ENCODE measurements at regions of chr7 and their contacts with region 1.

Region 1: GRCh38 chr7:101882595-101883564 is 65.5 kb downstream of the CUX1 start:
- DNase-seq: peak; percentile 95
- H3K4me3 ChIP-seq: peak overlapping the region in 2 of 4 donors; percentile 4 to 15
- H3K27ac ChIP-seq: peak overlapping the region; percentile 83 to 91 (median 84)
- H3K4me1 ChIP-seq: peaks cover 70 to 79% (median 75%) of the 10 kb centered on the region in 4 donors
- H3K27me3 ChIP-seq: no peaks in the 10 kb centered on the region
- CTCF ChIP-seq: peak in 2 of 3 experiments; percentile 3 to 20
- EP300 ChIP-seq: peak; percentile 17
- POLR2A ChIP-seq: no peak

Region 2: DNA sequence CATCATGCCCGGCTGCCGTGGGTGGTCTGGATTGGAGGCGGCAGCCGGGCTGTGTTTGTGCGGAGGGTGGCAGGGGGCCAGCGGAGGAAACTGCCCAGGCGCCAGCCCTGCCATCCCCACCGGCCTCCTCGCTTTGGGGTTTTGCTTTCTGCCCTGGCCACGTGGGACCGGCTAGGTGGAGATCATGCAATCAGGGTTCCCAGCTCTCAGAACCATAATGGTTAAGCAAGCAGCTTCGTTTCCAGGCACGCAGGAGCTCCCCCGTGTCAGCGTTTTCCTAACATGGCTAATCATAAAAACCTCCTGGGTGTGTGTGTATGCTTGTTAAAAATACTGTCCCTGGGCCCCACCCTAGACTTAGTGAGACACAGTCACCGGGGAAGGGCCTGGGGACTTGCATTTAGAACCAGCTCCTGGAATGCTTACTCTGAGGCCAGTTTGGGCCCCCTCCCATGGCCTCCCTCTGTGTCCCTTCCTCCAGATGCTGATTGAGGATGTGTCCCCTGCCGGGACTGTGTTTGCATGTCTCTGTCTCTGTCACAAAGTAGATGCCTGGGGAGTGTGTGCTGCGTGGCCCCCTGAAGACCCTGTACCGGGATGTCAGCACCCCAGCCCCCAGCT is 53.8 kb after region 1 on chr7:
- intact Hi-C with region 1: loop called (anchors 5 kb)
- DNase-seq: no peak
- H3K4me3 ChIP-seq: peak overlapping the region; percentile 40 to 49 (median 47)
- H3K27ac ChIP-seq: peak overlapping the region; percentile 82 to 90 (median 86)
- H3K4me1 ChIP-seq: peaks cover 57 to 83% (median 73%) of the 10 kb centered on the region in 4 donors
- H3K27me3 ChIP-seq: no peaks in the 10 kb centered on the region
- CTCF ChIP-seq: no peak
- EP300 ChIP-seq: no peak
- POLR2A ChIP-seq: no peak

Region 3: GRCh38 chr7:101953248-101953819 is 70.5 kb after region 1 on chr7:
- intact Hi-C with region 1: loop called (anchors 5 kb)
- DNase-seq: no peak
- H3K4me3 ChIP-seq: peak overlapping the region in 2 of 4 donors; percentile 5 to 15
- H3K27ac ChIP-seq: peak overlapping the region; percentile 82 to 92 (median 86)
- H3K4me1 ChIP-seq: peaks cover 57 to 86% (median 76%) of the 10 kb centered on the region in 4 donors
- H3K27me3 ChIP-seq: no peaks in the 10 kb centered on the region
- CTCF ChIP-seq: peak in 2 of 3 experiments; percentile 14 to 20
- EP300 ChIP-seq: peak; percentile 43
- POLR2A ChIP-seq: no peak

Measured in esophagus muscularis mucosa (tissue), 4 donors.